Activated T-helper 2 cell treated with anti-CD3 and anti-CD28 coated beads, Interferon-gamma antibody, Interleukin-2, Interleukin-4, amounts not matched to agents 10 μg/mL and 5 μg/mL and 100 μg/mL, durations not matched to agents 14 hours and 24 hours and 36 hours (primary cell): ENCODE measurements at regions of chr6 and their contacts with region 1.

Region 1: GRCh38 chr6:27838058-27838944 is 73.9 kb downstream of the OR2B2 start:
- DNase-seq: peak; percentile 85
- H3K4me3 Mint-ChIP-seq: no peak overlapping the region
- H3K27ac Mint-ChIP-seq: no peak overlapping the region
- H3K4me1 Mint-ChIP-seq: peaks cover 28% of the 10 kb centered on the region
- H3K27me3 Mint-ChIP-seq: no peaks in the 10 kb centered on the region

Region 2: DNA sequence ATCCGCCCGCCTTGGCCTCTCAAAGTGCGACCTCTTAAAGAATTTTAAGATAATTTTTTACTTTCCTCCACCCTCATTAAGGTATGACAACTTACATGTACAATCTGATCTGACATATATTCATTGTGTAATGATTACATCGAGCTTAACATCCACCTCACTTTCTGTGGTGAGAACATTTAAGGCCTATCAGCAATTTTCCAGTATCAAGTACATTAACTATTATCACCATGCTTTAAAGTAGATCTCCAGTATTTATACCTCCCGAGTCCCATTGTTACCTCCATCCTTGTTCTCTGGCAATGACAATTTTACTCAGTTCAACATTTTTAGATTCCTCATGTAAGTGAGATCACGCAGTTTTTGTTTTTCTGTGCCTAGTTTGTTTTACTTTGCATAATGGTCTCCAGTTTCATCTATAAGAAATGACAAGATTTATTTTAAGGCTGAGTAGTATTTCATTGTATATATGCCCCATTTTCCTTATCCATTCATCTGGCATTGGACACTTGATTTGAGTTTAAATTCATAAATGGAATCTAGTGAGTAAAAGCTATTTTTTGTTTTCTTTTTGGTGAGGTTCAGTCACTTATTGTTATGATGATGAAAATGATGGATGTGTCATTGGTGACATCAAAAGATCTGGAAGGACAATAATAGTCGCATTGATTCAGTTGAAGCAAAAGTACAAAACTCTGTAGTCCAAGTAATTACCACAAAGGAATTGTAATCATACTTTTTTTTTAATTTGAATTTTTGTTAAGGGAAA is 13.1 kb before region 1 on chr6:
- intact Hi-C with region 1: loop called (anchors 1 kb)
- DNase-seq: no peak
- H3K4me3 Mint-ChIP-seq: peak overlapping the region; percentile 80
- H3K27ac Mint-ChIP-seq: peak overlapping the region; percentile 89
- H3K4me1 Mint-ChIP-seq: peaks cover 27% of the 10 kb centered on the region
- H3K27me3 Mint-ChIP-seq: no peaks in the 10 kb centered on the region

Region 3: GRCh38 chr6:27864906-27865849 is 26.9 kb after region 1 on chr6:
- intact Hi-C with region 1: loop called (anchors 1 kb)
- DNase-seq: peak; percentile 83
- H3K4me3 Mint-ChIP-seq: peak overlapping the region; percentile 98
- H3K27ac Mint-ChIP-seq: peak overlapping the region; percentile 99
- H3K4me1 Mint-ChIP-seq: peaks cover 62% of the 10 kb centered on the region
- H3K27me3 Mint-ChIP-seq: no peaks in the 10 kb centered on the region

Region 4: DNA sequence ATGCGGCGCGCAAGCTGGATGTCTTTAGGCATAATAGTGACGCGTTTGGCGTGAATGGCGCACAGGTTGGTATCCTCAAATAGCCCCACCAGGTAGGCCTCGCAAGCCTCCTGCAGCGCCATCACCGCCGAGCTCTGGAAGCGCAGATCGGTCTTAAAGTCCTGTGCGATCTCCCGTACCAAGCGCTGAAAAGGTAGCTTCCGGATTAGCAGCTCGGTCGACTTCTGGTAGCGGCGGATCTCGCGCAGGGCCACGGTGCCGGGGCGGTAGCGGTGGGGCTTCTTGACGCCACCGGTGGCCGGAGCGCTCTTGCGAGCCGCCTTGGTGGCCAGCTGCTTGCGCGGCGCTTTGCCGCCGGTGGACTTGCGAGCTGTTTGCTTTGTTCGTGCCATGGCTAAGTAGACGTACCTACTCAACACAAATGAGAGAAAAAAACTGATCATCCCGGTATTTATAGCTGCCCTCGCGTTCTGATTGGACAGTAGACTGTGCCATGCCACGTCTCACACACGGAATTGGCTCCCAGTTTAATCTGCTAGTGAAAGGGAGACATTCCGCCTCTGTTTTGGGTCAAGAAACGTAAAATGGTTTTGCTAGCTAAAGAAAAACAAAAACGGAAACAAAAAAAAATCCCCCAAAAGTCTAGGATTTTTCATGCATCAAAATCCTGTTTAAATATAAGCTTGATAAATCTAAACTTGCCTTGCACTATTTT is 33.8 kb after region 1 on chr6:
- intact Hi-C with region 1: loop called (anchors 1 kb)
- DNase-seq: peak; percentile 85
- H3K4me3 Mint-ChIP-seq: peak overlapping the region; percentile 89
- H3K27ac Mint-ChIP-seq: peak overlapping the region; percentile 97
- H3K4me1 Mint-ChIP-seq: peaks cover 50% of the 10 kb centered on the region
- H3K27me3 Mint-ChIP-seq: no peaks in the 10 kb centered on the region

Region 5: GRCh38 chr6:28080631-28081485 is 242.6 kb after region 1 on chr6:
- intact Hi-C with region 1: no loop called
- DNase-seq: peak; percentile 82
- H3K4me3 Mint-ChIP-seq: peak overlapping the region; percentile 93
- H3K27ac Mint-ChIP-seq: peak overlapping the region; percentile 93
- H3K4me1 Mint-ChIP-seq: peaks cover 13% of the 10 kb centered on the region
- H3K27me3 Mint-ChIP-seq: no peaks in the 10 kb centered on the region